Activated CD8-positive, alpha-beta T cell treated with anti-CD3 and anti-CD28 coated beads for 36 hours (primary cell): ENCODE measurements at regions of chr6 and their contacts with region 1.

Region 1: DNA sequence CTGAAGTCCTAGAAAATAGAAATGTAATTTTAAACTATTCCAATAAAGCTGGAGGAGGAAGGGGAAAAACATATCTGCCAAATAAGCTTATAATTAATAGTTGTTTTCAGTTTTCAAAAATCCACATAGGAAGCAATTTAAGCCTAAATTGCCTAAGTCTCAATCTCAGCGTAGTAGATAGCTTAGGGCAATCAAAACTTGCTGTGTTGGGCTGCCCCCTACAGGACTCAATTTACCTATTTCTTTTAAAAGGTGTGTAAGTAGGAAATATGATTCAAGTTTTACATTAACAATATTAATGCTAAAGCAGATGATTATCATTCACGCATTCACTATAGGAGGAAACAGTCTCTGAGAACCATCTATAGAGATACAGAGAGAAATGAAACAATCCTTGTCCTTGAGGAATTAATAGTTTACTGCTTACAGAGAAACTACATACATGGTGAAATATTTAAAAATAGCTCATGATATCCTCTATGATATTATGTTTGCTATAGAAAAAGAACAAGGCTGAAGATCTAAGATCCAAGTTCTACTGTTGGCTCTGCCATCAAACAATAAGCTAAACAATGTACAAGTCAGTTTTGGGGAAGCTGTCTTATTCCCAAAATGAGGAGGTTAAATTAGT is 102.1 kb downstream of the ATG5 start:
- DNase-seq: peak; percentile 92
- ATAC-seq: peak; percentile 76
- H3K4me3 Mint-ChIP-seq: no peak overlapping the region
- H3K27ac Mint-ChIP-seq: no peak overlapping the region
- H3K4me1 Mint-ChIP-seq: peaks cover 16% of the 10 kb centered on the region
- H3K27me3 Mint-ChIP-seq: no peaks in the 10 kb centered on the region
- CTCF ChIP-seq: peak; percentile 89

Region 2: GRCh38 chr6:105484238-105485161 is 738.9 kb before region 1 on chr6:
- CTCF ChIA-PET with region 1: interaction called, 14 read pairs
- POLR2A ChIA-PET with region 1: no interaction called
- intact Hi-C with region 1: no loop called
- DNase-seq: peak; percentile 12
- ATAC-seq: peak; percentile 80
- H3K4me3 Mint-ChIP-seq: peak overlapping the region; percentile 22
- H3K27ac Mint-ChIP-seq: peak overlapping the region; percentile 74
- H3K4me1 Mint-ChIP-seq: peaks cover 21% of the 10 kb centered on the region
- H3K27me3 Mint-ChIP-seq: peaks cover 8% of the 10 kb centered on the region
- CTCF ChIP-seq: peak; percentile 62

Region 3: GRCh38 chr6:105992315-105992961 is 231.0 kb before region 1 on chr6:
- CTCF ChIA-PET with region 1: interaction called, 33 read pairs
- POLR2A ChIA-PET with region 1: no interaction called
- intact Hi-C with region 1: loop called (anchors 5 kb)
- DNase-seq: peak; percentile 88
- ATAC-seq: peak; percentile 88
- H3K4me3 Mint-ChIP-seq: peak overlapping the region; percentile 82
- H3K27ac Mint-ChIP-seq: peak overlapping the region; percentile 81
- H3K4me1 Mint-ChIP-seq: peaks cover 16% of the 10 kb centered on the region
- H3K27me3 Mint-ChIP-seq: peaks cover 71% of the 10 kb centered on the region
- CTCF ChIP-seq: no peak

Region 4: DNA sequence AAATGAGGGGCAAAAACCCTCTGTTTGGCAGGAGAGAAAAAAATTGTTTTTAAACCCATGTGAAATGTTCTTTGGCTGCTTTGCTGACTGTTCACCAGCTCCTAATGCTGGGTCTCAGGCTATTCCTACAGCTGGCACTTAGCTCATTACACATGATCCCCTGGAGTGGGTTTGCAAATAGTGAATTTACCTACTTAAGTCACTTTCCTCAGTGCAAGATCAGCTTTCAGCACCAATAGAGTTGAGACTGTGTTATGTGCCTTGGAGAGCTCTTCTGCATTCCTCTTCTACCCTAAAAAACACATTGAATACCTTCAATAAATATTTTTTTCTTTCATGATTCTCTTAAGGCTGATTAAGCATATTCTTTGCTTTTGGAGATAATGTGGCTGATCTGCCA is 195.7 kb before region 1 on chr6:
- CTCF ChIA-PET with region 1: no interaction called
- POLR2A ChIA-PET with region 1: no interaction called
- intact Hi-C with region 1: no loop called
- DNase-seq: no peak
- ATAC-seq: no peak
- H3K4me3 Mint-ChIP-seq: no peak overlapping the region
- H3K27ac Mint-ChIP-seq: no peak overlapping the region
- H3K4me1 Mint-ChIP-seq: peaks cover 14% of the 10 kb centered on the region
- H3K27me3 Mint-ChIP-seq: peaks cover 31% of the 10 kb centered on the region
- CTCF ChIP-seq: no peak

Region 5: DNA sequence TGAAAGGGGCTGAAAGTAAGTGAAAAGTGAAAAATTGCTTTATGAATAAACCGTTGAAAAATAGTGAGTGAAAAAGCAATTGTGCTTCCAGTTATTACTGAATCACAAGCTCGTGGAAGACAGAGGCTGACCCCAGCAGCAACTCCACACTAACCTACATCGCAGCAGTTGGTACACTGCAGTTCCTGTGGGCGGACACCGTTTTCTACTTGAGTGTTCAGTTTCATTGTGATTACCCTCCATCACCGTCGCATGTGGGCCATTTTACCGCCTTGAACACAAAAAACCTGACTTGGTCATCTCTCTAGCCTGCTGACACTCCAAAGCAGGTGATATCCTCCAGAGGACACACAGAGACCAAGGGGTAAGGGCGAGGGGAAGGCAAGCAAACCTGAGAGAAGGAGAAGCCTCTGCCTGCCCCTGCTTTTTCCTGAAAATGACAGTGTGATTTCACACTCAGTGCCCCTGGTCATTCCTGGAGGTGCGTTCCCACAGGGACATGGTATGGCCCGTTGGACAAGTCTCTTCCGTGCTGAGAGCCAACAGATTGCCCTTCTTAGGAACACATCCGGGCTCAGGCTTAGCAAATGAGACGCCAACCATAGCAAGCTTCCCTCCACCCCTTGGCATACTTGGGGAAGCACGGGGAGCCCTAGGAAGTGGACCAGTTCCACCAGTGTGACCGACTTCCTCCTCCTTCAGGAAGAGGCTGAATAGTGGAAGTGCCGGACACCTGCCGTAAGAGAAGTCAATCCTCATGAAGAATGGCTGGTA is 108.7 kb before region 1 on chr6:
- CTCF ChIA-PET with region 1: interaction called, 18 read pairs
- POLR2A ChIA-PET with region 1: no interaction called
- intact Hi-C with region 1: no loop called
- DNase-seq: peak; percentile 93
- ATAC-seq: peak; percentile 74
- H3K4me3 Mint-ChIP-seq: peak overlapping the region; percentile 46
- H3K27ac Mint-ChIP-seq: peak overlapping the region; percentile 71
- H3K4me1 Mint-ChIP-seq: peaks cover 89% of the 10 kb centered on the region
- H3K27me3 Mint-ChIP-seq: peaks cover 18% of the 10 kb centered on the region
- CTCF ChIP-seq: no peak

Region 6: DNA sequence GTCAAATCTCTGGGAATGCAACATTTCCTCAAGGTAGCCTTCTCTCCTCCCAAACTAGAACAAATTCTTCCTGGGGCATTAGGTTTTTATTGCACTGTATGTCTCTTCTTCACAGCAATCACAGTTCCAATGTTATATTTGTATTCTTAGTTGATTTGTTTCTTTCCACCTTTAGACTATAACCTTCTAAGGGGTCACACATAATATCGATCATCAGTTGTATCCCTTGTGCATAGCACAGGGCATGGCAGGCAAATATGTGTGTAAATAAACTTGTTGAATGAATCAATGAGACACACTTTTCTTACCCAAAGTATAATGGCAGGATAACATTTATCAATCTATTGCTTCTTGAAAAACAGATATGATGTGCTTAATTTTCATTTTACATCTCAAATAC is 21.1 kb after region 1 on chr6:
- CTCF ChIA-PET with region 1: no interaction called
- POLR2A ChIA-PET with region 1: no interaction called
- intact Hi-C with region 1: no loop called
- DNase-seq: no peak
- ATAC-seq: no peak
- H3K4me3 Mint-ChIP-seq: no peak overlapping the region
- H3K27ac Mint-ChIP-seq: no peak overlapping the region
- H3K4me1 Mint-ChIP-seq: peaks cover 13% of the 10 kb centered on the region
- H3K27me3 Mint-ChIP-seq: no peaks in the 10 kb centered on the region
- CTCF ChIP-seq: no peak